Activated T-helper 2 cell treated with anti-CD3 and anti-CD28 coated beads, Interferon-gamma antibody, Interleukin-2, Interleukin-4, amounts not matched to agents 10 μg/mL and 5 μg/mL and 100 μg/mL, durations not matched to agents 14 hours and 24 hours and 36 hours (primary cell): ENCODE measurements at regions of chr19 and their contacts with region 1.

Region 1: GRCh38 chr19:19459707-19460251 is 54.3 kb downstream of the GATAD2A start:
- DNase-seq: peak; percentile 66
- H3K4me3 Mint-ChIP-seq: peak overlapping the region; percentile 77
- H3K27ac Mint-ChIP-seq: peak overlapping the region; percentile 94
- H3K4me1 Mint-ChIP-seq: peaks cover 60% of the 10 kb centered on the region
- H3K27me3 Mint-ChIP-seq: no peaks in the 10 kb centered on the region

Region 2: DNA sequence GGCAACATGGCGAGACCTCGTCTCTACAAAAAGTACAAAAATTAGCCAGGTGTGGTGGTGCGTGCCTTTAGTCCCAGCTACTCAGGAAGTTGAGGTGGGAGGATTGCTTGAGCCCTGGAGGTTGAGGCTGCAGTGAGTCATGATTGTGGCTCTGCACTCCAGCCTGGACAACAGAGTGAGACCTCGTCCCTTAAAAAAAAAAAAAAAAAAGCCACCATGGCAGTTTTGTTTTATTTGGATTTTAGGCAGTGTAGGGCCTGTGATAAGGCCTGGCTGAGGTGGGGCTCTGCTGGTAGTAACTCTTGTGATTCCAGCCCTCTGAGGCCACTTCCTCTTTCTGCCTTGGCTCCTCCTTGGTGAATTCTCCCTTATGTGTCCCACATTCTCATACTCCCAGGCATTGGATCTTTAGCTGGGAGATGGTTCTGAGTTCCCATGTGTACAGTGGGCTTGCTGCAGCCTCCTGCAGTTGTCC is 15.1 kb before region 1 on chr19:
- intact Hi-C with region 1: loop called (anchors 1 kb)
- DNase-seq: no peak
- H3K4me3 Mint-ChIP-seq: peak overlapping the region; percentile 28
- H3K27ac Mint-ChIP-seq: peak overlapping the region; percentile 74
- H3K4me1 Mint-ChIP-seq: peaks cover 54% of the 10 kb centered on the region
- H3K27me3 Mint-ChIP-seq: no peaks in the 10 kb centered on the region

Region 3: GRCh38 chr19:19475849-19476828 is 16.4 kb after region 1 on chr19:
- intact Hi-C with region 1: loop called (anchors 2 kb)
- DNase-seq: no peak
- H3K4me3 Mint-ChIP-seq: peak overlapping the region; percentile 47
- H3K27ac Mint-ChIP-seq: peak overlapping the region; percentile 70
- H3K4me1 Mint-ChIP-seq: peaks cover 72% of the 10 kb centered on the region
- H3K27me3 Mint-ChIP-seq: no peaks in the 10 kb centered on the region